IMR-90 (cell line): ENCODE measurements at regions of chr2 and their contacts with region 1.

Region 1: DNA sequence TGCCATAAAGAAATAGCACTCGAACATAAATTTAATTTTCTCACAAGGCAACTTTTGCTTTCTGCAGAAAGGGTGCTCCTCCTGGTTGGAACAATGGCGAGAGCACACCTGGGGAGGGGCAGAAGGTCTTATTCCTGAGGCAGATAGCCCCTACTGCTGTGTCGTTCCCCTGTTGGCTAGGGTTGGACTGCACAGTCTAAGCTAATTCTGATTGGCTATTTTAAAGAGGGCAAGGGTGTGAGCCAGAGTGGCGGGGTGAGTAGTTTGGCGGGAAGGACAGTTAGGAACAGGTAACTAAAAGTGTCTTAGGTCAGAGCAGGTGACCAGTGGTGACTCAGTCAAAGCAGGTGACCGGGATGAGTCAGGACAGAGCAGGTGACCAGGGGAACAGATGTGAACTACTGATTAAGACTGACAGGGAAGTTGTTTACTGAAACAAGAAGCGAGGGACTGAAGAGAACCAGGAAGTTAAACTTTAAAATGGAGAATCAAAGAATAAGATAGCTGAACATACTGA is 49.7 kb upstream of the AGAP1 start:
- DNase-seq: no peak
- ATAC-seq: no peak
- H3K4me3 ChIP-seq: no peak overlapping the region
- H3K27ac ChIP-seq: no peak overlapping the region
- H3K4me1 ChIP-seq: no peaks in the 10 kb centered on the region
- H3K27me3 ChIP-seq: peaks cover 17% of the 10 kb centered on the region
- CTCF ChIP-seq: no peak
- POLR2A ChIP-seq: no peak
- RAD21 ChIP-seq: no peak

Region 2: GRCh38 chr2:235286622-235287374 is 157.4 kb before region 1 on chr2:
- CTCF ChIA-PET with region 1: no interaction called
- POLR2A ChIA-PET with region 1: interaction called, 15 read pairs
- dilution Hi-C with region 1: no loop called
- in situ Hi-C with region 1: no loop called
- intact Hi-C with region 1: no loop called
- DNase-seq: no peak
- ATAC-seq: no peak; the same call in 1 of the 2 replicates
- H3K4me3 ChIP-seq: no peak overlapping the region
- H3K27ac ChIP-seq: no peak overlapping the region
- H3K4me1 ChIP-seq: no peaks in the 10 kb centered on the region
- H3K27me3 ChIP-seq: peaks cover 17% of the 10 kb centered on the region
- CTCF ChIP-seq: no peak
- POLR2A ChIP-seq: no peak
- RAD21 ChIP-seq: no peak

Region 3: DNA sequence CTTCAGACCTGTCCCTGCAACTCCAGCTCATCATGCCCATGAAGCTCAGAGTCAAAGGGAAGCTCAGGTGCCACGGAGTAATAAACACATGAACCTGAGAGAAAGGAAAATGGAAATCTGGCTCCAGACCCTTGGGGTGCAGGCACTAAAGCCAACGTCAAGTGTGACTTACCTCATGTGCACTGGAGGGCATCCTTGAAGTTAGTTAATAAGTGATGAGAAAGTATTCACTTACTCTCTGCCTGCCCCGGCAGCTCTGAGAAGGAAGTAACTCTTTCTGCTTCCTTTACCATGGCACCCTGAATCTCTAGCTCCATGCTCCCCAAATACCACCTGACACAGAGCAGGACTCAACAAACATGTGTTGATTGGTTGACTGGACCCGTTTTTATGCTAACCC is 28.3 kb after region 1 on chr2:
- CTCF ChIA-PET with region 1: no interaction called
- POLR2A ChIA-PET with region 1: interaction called, 10 read pairs
- dilution Hi-C with region 1: no loop called
- in situ Hi-C with region 1: no loop called
- intact Hi-C with region 1: no loop called
- DNase-seq: no peak
- ATAC-seq: no peak
- H3K4me3 ChIP-seq: no peak overlapping the region
- H3K27ac ChIP-seq: no peak overlapping the region
- H3K4me1 ChIP-seq: peaks cover 3% of the 10 kb centered on the region; the same call in 1 of the 2 replicates
- H3K27me3 ChIP-seq: peaks cover 5% of the 10 kb centered on the region; the same call in 1 of the 2 replicates
- CTCF ChIP-seq: no peak
- POLR2A ChIP-seq: no peak
- RAD21 ChIP-seq: no peak